GM12878 (cell line): ENCODE measurements at regions of chr2 and their contacts with region 1.

Region 1: DNA sequence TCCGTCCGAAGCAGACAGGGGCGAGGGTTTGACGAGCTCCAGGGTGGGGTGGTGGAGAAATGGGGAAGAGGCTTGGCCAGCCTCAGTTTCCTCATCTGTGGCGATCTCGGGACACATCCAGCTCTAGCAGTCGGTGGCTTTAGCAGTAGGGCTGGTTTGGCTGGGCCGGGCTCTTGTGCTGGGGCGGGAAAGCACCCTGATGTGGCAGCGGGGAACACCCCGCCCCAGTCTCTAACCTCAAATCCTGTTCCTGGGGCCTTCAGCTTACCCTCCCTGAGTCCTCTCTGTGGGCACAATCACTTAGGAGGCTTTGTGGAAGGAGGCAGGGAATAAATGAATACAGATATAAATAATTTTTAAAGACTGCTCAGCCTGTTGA is 26.5 kb upstream of the MCFD2 start:
- DNase-seq: no peak
- ATAC-seq: peak; percentile 71
- H3K4me3 ChIP-seq: peak overlapping the region; percentile 83
- H3K27ac ChIP-seq: peak overlapping the region; percentile 93
- H3K4me1 ChIP-seq: peaks cover 24% of the 10 kb centered on the region
- H3K27me3 ChIP-seq: no peaks in the 10 kb centered on the region
- CTCF ChIP-seq: no peak
- EP300 ChIP-seq: no peak
- POLR2A ChIP-seq: 0 out of 2 replicates have a peak, but pooled peaks have one; percentile 18
- RAD21 ChIP-seq: no peak

Region 2: GRCh38 chr2:46915811-46916630 is 26.1 kb before region 1 on chr2:
- CTCF ChIA-PET with region 1: no interaction called
- POLR2A ChIA-PET with region 1: no interaction called
- RAD21 ChIA-PET with region 1: interaction called, 6 read pairs
- SMC1A ChIA-PET with region 1: interaction called, 16 read pairs
- in situ Hi-C with region 1: no loop called
- intact Hi-C with region 1: no loop called
- DNase-seq: peak; percentile 40
- ATAC-seq: peak; percentile 87
- H3K4me3 ChIP-seq: peak overlapping the region; percentile 84
- H3K27ac ChIP-seq: peak overlapping the region; percentile 64
- H3K4me1 ChIP-seq: peaks cover 16% of the 10 kb centered on the region
- H3K27me3 ChIP-seq: no peaks in the 10 kb centered on the region
- CTCF ChIP-seq: no peak
- EP300 ChIP-seq: no peak
- POLR2A ChIP-seq: peak; percentile 82
- RAD21 ChIP-seq: no peak

Region 3: GRCh38 chr2:46923041-46923528 is 19.0 kb before region 1 on chr2:
- CTCF ChIA-PET with region 1: interaction called, 18 read pairs
- POLR2A ChIA-PET with region 1: interaction called, 3 read pairs
- RAD21 ChIA-PET with region 1: interaction called, 6 read pairs
- SMC1A ChIA-PET with region 1: interaction called, 16 read pairs
- in situ Hi-C with region 1: no loop called
- intact Hi-C with region 1: no loop called
- DNase-seq: no peak
- ATAC-seq: no peak
- H3K4me3 ChIP-seq: no peak overlapping the region
- H3K27ac ChIP-seq: no peak overlapping the region
- H3K4me1 ChIP-seq: peaks cover 4% of the 10 kb centered on the region
- H3K27me3 ChIP-seq: no peaks in the 10 kb centered on the region
- CTCF ChIP-seq: no peak
- EP300 ChIP-seq: no peak
- POLR2A ChIP-seq: no peak
- RAD21 ChIP-seq: no peak

Region 4: DNA sequence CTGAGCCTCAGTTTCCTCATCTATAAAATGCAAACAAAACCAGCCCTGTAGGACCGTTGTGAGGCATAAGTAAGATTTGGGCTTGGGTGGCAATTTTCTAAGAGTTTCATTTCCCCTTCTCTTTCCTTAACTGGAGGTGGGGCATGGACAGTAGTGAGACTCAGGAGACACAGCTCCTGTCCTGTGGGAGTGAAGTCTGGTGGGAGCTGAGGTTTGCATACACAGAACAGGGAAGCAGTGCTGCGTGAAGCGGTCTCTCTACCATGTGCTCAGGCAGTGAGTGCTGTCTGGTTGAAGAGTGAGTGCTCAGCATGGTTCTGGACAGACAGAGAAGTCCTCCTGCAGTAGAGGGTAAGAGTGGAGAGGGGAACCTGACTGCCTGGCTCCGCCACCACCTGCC is 35.8 kb after region 1 on chr2:
- CTCF ChIA-PET with region 1: interaction called, 4 read pairs
- POLR2A ChIA-PET with region 1: interaction called, 8 read pairs
- RAD21 ChIA-PET with region 1: interaction called, 12 read pairs
- SMC1A ChIA-PET with region 1: interaction called, 5 read pairs
- in situ Hi-C with region 1: no loop called
- intact Hi-C with region 1: loop called (anchors 1 kb)
- DNase-seq: no peak
- ATAC-seq: peak; percentile 37
- H3K4me3 ChIP-seq: no peak overlapping the region
- H3K27ac ChIP-seq: peak overlapping the region; percentile 63
- H3K4me1 ChIP-seq: peaks cover 37% of the 10 kb centered on the region
- H3K27me3 ChIP-seq: no peaks in the 10 kb centered on the region
- CTCF ChIP-seq: no peak
- EP300 ChIP-seq: no peak
- POLR2A ChIP-seq: no peak
- RAD21 ChIP-seq: no peak